HepG2 (cell line): ENCODE measurements at regions of chr4 and their contacts with region 1.

Region 1: DNA sequence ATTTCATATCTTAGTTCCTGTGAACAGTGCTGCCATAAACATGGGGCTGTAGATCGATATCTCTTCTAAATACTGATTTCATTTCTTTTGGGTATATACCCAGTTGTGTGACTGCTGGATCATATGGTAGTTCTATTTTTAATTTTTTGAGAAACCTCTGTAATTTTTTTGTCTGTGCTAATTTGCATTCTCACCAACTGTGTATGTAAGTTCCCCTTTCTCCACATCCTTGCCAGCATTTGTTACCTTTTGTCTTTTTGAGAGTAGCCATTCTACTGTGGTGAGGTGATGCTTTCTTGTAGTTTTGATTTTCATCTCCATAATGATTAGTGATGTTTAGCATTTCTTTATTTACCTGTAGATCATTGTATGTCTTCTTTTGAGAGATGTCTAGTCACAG is 2086.5 kb upstream of the TENM3 start:
- DNase-seq: no peak
- ATAC-seq: no peak
- H3K4me3 ChIP-seq: no peak overlapping the region
- H3K27ac ChIP-seq: no peak overlapping the region
- H3K4me1 ChIP-seq: 0 out of 2 replicates have a peak, but pooled peaks cover 6% of the 10 kb centered on the region
- H3K27me3 ChIP-seq: no peaks in the 10 kb centered on the region
- CTCF ChIP-seq: no peak
- EP300 ChIP-seq: no peak
- POLR2A ChIP-seq: no peak
- RAD21 ChIP-seq: no peak

Region 2: DNA sequence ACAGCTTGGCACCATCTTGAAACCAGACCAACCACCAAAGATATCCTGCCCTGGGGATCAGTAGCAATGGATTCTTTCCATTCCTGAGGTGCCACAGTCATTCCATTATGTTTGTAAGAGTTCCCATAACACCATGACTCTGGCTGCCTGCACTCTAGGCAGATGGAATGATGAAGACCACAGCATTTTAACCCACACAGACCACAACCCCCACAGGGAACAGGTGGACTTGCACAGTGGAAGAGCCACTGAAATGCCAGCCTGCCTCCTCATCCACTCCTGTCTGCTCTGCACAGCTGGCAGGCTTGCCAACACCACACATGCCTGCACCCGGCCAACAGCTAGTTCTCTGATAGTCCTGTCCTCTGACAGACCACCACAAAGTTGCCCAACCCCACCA is 352.2 kb before region 1 on chr4:
- CTCF ChIA-PET with region 1: no interaction called
- POLR2A ChIA-PET with region 1: no interaction called
- in situ Hi-C with region 1: no loop called
- intact Hi-C with region 1: no loop called
- DNase-seq: no peak
- ATAC-seq: no peak
- H3K4me3 ChIP-seq: no peak overlapping the region
- H3K27ac ChIP-seq: no peak overlapping the region
- H3K4me1 ChIP-seq: no peaks in the 10 kb centered on the region
- H3K27me3 ChIP-seq: no peaks in the 10 kb centered on the region
- CTCF ChIP-seq: no peak
- EP300 ChIP-seq: no peak
- POLR2A ChIP-seq: no peak
- RAD21 ChIP-seq: no peak

Region 3: GRCh38 chr4:180081072-180081471 is 75.6 kb before region 1 on chr4:
- CTCF ChIA-PET with region 1: no interaction called
- POLR2A ChIA-PET with region 1: no interaction called
- in situ Hi-C with region 1: no loop called
- intact Hi-C with region 1: no loop called
- DNase-seq: no peak
- ATAC-seq: no peak
- H3K4me3 ChIP-seq: no peak overlapping the region
- H3K27ac ChIP-seq: no peak overlapping the region
- H3K4me1 ChIP-seq: no peaks in the 10 kb centered on the region
- H3K27me3 ChIP-seq: no peaks in the 10 kb centered on the region
- CTCF ChIP-seq: no peak
- EP300 ChIP-seq: no peak
- POLR2A ChIP-seq: no peak
- RAD21 ChIP-seq: no peak

Region 4: DNA sequence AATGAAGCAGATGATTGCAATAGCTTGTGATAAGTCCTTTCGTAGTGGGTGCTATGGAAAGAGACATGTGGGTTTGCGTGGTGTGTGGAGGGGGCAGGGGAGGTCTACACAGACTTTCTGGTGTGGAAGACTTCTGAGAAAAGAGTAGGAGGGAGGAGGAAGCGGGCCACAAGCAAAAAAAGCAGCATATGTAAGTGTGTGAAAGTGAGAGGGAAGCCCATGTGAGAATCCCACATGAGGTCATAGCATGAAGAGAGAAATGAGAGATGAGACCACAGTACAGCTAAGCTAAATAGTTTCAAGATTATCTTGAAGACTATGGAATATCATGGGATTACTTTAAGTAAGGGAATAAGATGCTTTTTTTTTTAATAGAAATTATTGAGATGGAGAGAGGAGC is 46.7 kb after region 1 on chr4:
- CTCF ChIA-PET with region 1: no interaction called
- POLR2A ChIA-PET with region 1: no interaction called
- in situ Hi-C with region 1: no loop called
- intact Hi-C with region 1: loop called (anchors 1 kb)
- DNase-seq: no peak
- ATAC-seq: no peak
- H3K4me3 ChIP-seq: no peak overlapping the region
- H3K27ac ChIP-seq: no peak overlapping the region
- H3K4me1 ChIP-seq: no peaks in the 10 kb centered on the region
- H3K27me3 ChIP-seq: no peaks in the 10 kb centered on the region
- CTCF ChIP-seq: no peak
- EP300 ChIP-seq: no peak
- POLR2A ChIP-seq: no peak
- RAD21 ChIP-seq: no peak

Region 5: DNA sequence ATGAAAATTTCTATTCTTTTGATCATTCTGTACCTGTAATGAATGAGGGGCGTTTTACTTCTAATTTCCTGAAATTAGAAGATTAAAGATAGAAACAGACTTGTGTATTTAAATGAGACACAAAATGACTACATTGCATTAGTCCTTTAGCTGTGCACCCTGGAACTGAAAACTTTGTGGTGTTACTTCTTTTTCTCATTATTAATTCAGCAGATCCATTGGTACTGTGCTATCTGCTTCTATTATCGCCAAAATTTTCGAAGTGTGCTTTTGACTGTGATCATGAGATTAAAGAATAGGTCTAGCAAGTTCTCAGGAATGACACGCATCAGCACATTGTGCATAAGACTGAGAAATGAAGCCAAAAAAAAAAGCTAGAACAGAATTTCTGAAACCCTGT is 147.6 kb after region 1 on chr4:
- CTCF ChIA-PET with region 1: no interaction called
- POLR2A ChIA-PET with region 1: no interaction called
- in situ Hi-C with region 1: no loop called
- intact Hi-C with region 1: no loop called
- DNase-seq: no peak
- ATAC-seq: no peak
- H3K4me3 ChIP-seq: no peak overlapping the region
- H3K27ac ChIP-seq: no peak overlapping the region
- H3K4me1 ChIP-seq: no peaks in the 10 kb centered on the region
- H3K27me3 ChIP-seq: no peaks in the 10 kb centered on the region
- CTCF ChIP-seq: no peak
- EP300 ChIP-seq: no peak
- POLR2A ChIP-seq: no peak
- RAD21 ChIP-seq: no peak